CD4-positive, alpha-beta memory T cell (primary cell): ENCODE measurements at regions of chr5 and their contacts with region 1.

Region 1: GRCh38 chr5:175534070-175534932 is 55.9 kb downstream of the SFXN1 start:
- DNase-seq: peak; percentile 77 to 82 (median 81)
- H3K4me3 ChIP-seq: peak overlapping the region in 1 of 2 donors; percentile 14
- H3K4me3 Mint-ChIP-seq: peak overlapping the region; percentile 65 to 77 (median 69)
- H3K27ac ChIP-seq: no peak overlapping the region
- H3K27ac Mint-ChIP-seq: peak overlapping the region in 6 of 7 donors; percentile 9 to 85 (median 46)
- H3K4me1 ChIP-seq: peaks cover 14% of the 10 kb centered on the region
- H3K4me1 Mint-ChIP-seq: peaks cover 9 to 24% (median 19%) of the 10 kb centered on the region in 4 donors
- H3K27me3 ChIP-seq: no peaks in the 10 kb centered on the region
- H3K27me3 Mint-ChIP-seq: no peaks in the 10 kb centered on the region

Region 2: GRCh38 chr5:175261090-175261489 is 273.2 kb before region 1 on chr5:
- CTCF ChIA-PET with region 1: no interaction called
- POLR2A ChIA-PET with region 1: no interaction called
- intact Hi-C with region 1: no loop called
- DNase-seq: no peak
- H3K4me3 ChIP-seq: no peak overlapping the region
- H3K4me3 Mint-ChIP-seq: no peak overlapping the region
- H3K27ac ChIP-seq: no peak overlapping the region
- H3K27ac Mint-ChIP-seq: no peak overlapping the region
- H3K4me1 ChIP-seq: no peaks in the 10 kb centered on the region
- H3K4me1 Mint-ChIP-seq: peaks cover 0 to 4% (median 0%) of the 10 kb centered on the region in 4 donors
- H3K27me3 ChIP-seq: no peaks in the 10 kb centered on the region
- H3K27me3 Mint-ChIP-seq: peaks cover 4 to 19% of the 10 kb centered on the region in 2 donors

Region 3: DNA sequence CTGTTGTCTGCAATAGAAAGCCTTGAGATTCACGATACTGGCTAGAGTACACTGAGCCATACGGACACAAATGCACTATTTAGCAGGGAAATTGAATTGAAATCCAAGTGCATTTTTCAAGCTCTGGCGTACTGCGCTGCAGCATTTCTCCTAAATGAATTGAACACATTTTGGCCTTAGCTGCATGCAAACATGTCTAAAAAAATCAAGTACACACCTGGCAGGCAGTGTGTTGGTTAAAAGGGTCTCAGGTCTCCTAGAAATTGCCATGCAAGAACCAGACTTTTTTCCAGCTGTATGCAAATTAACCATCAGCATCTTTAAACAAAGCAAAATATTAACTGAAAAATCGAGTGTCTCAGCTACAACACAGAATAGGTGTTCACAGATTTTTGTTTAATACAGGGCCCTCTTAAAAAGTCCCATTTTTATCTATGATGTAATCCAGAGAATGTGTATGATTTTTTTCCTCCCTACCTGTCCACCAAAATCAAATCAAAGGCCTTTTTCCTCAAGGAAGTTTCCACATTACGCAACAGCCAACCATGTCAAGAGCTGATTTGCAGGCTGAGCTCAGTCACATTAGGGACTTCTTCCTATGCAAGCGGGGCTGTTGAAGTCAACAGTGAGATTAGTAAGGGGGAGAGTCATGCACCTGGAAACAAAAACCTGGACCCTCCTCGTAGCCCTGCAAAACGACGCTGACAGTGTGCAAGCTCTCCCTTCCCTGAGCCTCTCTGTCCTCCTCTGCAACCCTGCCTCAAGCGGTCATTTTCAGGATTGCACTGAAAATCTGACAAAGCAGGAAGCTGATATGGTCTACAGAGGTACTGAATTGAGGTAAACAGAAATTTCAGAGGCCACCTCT is 70.0 kb before region 1 on chr5:
- CTCF ChIA-PET with region 1: interaction called, 16 read pairs
- POLR2A ChIA-PET with region 1: no interaction called
- intact Hi-C with region 1: no loop called
- DNase-seq: peak; percentile 43 to 67 (median 57)
- H3K4me3 ChIP-seq: no peak overlapping the region
- H3K4me3 Mint-ChIP-seq: peak overlapping the region in 2 of 8 donors; percentile 13 to 45
- H3K27ac ChIP-seq: no peak overlapping the region
- H3K27ac Mint-ChIP-seq: peak overlapping the region in 3 of 7 donors; percentile 13 to 69 (median 17)
- H3K4me1 ChIP-seq: peaks cover 4% of the 10 kb centered on the region
- H3K4me1 Mint-ChIP-seq: peaks cover 5 to 10% (median 6%) of the 10 kb centered on the region in 4 donors
- H3K27me3 ChIP-seq: no peaks in the 10 kb centered on the region
- H3K27me3 Mint-ChIP-seq: peaks cover 2 to 5% of the 10 kb centered on the region in 2 donors

Region 4: GRCh38 chr5:175517818-175518450 is 16.4 kb before region 1 on chr5:
- CTCF ChIA-PET with region 1: interaction called, 66 read pairs
- POLR2A ChIA-PET with region 1: interaction called, 10 read pairs
- intact Hi-C with region 1: no loop called
- DNase-seq: peak in 2 of 5 donors; percentile 29 to 90
- H3K4me3 ChIP-seq: peak overlapping the region in 1 of 2 donors; percentile 11
- H3K4me3 Mint-ChIP-seq: peak overlapping the region; percentile 43 to 82 (median 54)
- H3K27ac ChIP-seq: peak overlapping the region; percentile 55
- H3K27ac Mint-ChIP-seq: peak overlapping the region; percentile 69 to 95 (median 90)
- H3K4me1 ChIP-seq: peaks cover 74% of the 10 kb centered on the region
- H3K4me1 Mint-ChIP-seq: peaks cover 57 to 87% (median 70%) of the 10 kb centered on the region in 4 donors
- H3K27me3 ChIP-seq: no peaks in the 10 kb centered on the region
- H3K27me3 Mint-ChIP-seq: no peaks in the 10 kb centered on the region

Region 5: GRCh38 chr5:175649967-175650366 is 115.7 kb after region 1 on chr5:
- CTCF ChIA-PET with region 1: interaction called, 15 read pairs
- POLR2A ChIA-PET with region 1: no interaction called
- intact Hi-C with region 1: no loop called
- DNase-seq: no peak
- H3K4me3 ChIP-seq: no peak overlapping the region
- H3K4me3 Mint-ChIP-seq: no peak overlapping the region
- H3K27ac ChIP-seq: no peak overlapping the region
- H3K27ac Mint-ChIP-seq: peak overlapping the region in 2 of 7 donors; percentile 31 to 35
- H3K4me1 ChIP-seq: peaks cover 54% of the 10 kb centered on the region
- H3K4me1 Mint-ChIP-seq: peaks cover 48 to 64% (median 55%) of the 10 kb centered on the region in 4 donors
- H3K27me3 ChIP-seq: no peaks in the 10 kb centered on the region
- H3K27me3 Mint-ChIP-seq: no peaks in the 10 kb centered on the region

Region 6: GRCh38 chr5:175696139-175696854 is 162.0 kb after region 1 on chr5:
- CTCF ChIA-PET with region 1: interaction called, 138 read pairs
- POLR2A ChIA-PET with region 1: interaction called, 4 read pairs
- intact Hi-C with region 1: loop called (anchors 1 kb)
- DNase-seq: peak; percentile 65 to 70 (median 66)
- H3K4me3 ChIP-seq: no peak overlapping the region
- H3K4me3 Mint-ChIP-seq: peak overlapping the region; percentile 15 to 76 (median 64)
- H3K27ac ChIP-seq: no peak overlapping the region
- H3K27ac Mint-ChIP-seq: peak overlapping the region; percentile 73 to 91 (median 83)
- H3K4me1 ChIP-seq: peaks cover 16% of the 10 kb centered on the region
- H3K4me1 Mint-ChIP-seq: peaks cover 13 to 34% (median 23%) of the 10 kb centered on the region in 4 donors
- H3K27me3 ChIP-seq: no peaks in the 10 kb centered on the region
- H3K27me3 Mint-ChIP-seq: no peaks in the 10 kb centered on the region

Region 7: DNA sequence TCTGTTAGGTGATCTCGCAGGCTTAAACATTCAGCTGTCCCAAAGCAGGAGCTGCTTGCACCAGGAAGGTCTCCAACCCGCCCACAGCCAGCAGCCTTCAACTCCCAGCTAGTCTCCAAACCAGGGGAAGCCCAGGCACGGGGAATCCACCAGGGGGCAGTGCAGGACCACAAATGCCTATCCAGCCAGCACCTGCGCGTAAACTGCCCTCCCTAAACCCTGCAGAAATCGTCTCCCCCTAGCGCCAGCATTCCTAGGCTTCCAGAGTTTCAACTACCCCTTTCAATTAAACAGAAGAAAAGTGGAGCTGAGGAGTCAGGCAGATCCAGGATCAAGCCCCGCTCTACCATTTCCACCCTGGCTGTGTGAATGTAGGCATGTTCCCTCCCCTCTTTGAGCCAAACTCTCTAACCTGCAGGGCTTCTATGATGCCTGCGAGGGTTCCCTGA is 195.6 kb after region 1 on chr5:
- CTCF ChIA-PET with region 1: interaction called, 18 read pairs
- POLR2A ChIA-PET with region 1: no interaction called
- intact Hi-C with region 1: no loop called
- DNase-seq: peak; percentile 82 to 89 (median 87)
- H3K4me3 ChIP-seq: no peak overlapping the region
- H3K4me3 Mint-ChIP-seq: peak overlapping the region in 1 of 8 donors; percentile 54
- H3K27ac ChIP-seq: no peak overlapping the region
- H3K27ac Mint-ChIP-seq: peak overlapping the region in 3 of 7 donors; percentile 14 to 46 (median 44)
- H3K4me1 ChIP-seq: peaks cover 5% of the 10 kb centered on the region
- H3K4me1 Mint-ChIP-seq: peaks cover 4 to 7% (median 7%) of the 10 kb centered on the region in 4 donors
- H3K27me3 ChIP-seq: peaks cover 4% of the 10 kb centered on the region
- H3K27me3 Mint-ChIP-seq: peaks cover 14 to 18% of the 10 kb centered on the region in 2 donors